ENCODE measurements at regions of chr2 and their contacts with region 1.

Region 1: DNA sequence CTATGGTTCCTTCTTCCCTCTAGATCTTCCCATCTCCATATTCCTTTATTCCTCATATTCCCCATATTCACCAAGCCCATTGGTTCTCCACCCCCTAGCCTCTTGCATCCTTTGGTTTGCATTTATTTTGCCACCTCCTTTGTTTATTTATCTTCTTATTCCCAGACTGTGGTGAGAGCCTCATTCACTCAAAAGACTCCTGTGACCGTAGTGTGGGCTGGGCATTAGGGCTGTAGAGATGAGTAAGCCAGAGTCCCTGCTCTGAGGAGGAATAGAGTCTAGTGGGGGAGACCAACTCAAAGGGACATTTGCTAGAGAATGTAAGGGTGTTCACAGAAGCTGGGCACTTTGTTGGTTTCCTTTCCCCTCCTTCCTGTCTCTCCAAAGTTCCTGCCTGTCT is 8.3 kb downstream of the ATG16L1 start:
- DNase-seq: no peak
- H3K4me3 ChIP-seq: no peak overlapping the region
- H3K27ac ChIP-seq: no peak overlapping the region
- H3K4me1 ChIP-seq: peaks cover 2% of the 10 kb centered on the region
- H3K27me3 ChIP-seq: no peaks in the 10 kb centered on the region
- CTCF ChIP-seq: no peak
- EP300 ChIP-seq: no peak
- POLR2A ChIP-seq: no peak

Region 2: GRCh38 chr2:233449081-233449901 is 189.6 kb after region 1 on chr2:
- intact Hi-C with region 1: loop called (anchors 5 to 10 kb)
- DNase-seq: peak in 3 of 5 donors; percentile 46 to 69 (median 58)
- H3K4me3 ChIP-seq: no peak overlapping the region
- H3K27ac ChIP-seq: no peak overlapping the region
- H3K4me1 ChIP-seq: peaks cover 7% of the 10 kb centered on the region
- H3K27me3 ChIP-seq: no peaks in the 10 kb centered on the region
- CTCF ChIP-seq: peak; percentile 29 to 42 (median 41)
- EP300 ChIP-seq: no peak
- POLR2A ChIP-seq: no peak

Region 3: GRCh38 chr2:233627331-233628025 is 367.7 kb after region 1 on chr2:
- intact Hi-C with region 1: no loop called
- DNase-seq: no peak
- H3K4me3 ChIP-seq: no peak overlapping the region
- H3K27ac ChIP-seq: no peak overlapping the region
- H3K4me1 ChIP-seq: no peaks in the 10 kb centered on the region
- H3K27me3 ChIP-seq: no peaks in the 10 kb centered on the region
- CTCF ChIP-seq: no peak
- EP300 ChIP-seq: no peak
- POLR2A ChIP-seq: no peak

Measured in ovary (tissue), 10 donors.